Calu3 (cell line): ENCODE measurements at regions of chr18 and their contacts with region 1.

Region 1: GRCh38 chr18:75210274-75211001 is at the start of gene TSHZ1:
- DNase-seq: peak; percentile 43
- H3K4me3 Mint-ChIP-seq: peak within 1 kb of the TSS; percentile 98
- H3K27ac Mint-ChIP-seq: peak within 1 kb of the TSS; percentile 77
- H3K4me1 Mint-ChIP-seq: peaks cover 51% of the 10 kb centered on the region
- H3K27me3 Mint-ChIP-seq: no peaks in the 10 kb centered on the region
- CTCF ChIP-seq: no peak
- total RNA-seq, gene TSHZ1: 8.6 and 10.8 TPM in 2 replicates

Region 2: DNA sequence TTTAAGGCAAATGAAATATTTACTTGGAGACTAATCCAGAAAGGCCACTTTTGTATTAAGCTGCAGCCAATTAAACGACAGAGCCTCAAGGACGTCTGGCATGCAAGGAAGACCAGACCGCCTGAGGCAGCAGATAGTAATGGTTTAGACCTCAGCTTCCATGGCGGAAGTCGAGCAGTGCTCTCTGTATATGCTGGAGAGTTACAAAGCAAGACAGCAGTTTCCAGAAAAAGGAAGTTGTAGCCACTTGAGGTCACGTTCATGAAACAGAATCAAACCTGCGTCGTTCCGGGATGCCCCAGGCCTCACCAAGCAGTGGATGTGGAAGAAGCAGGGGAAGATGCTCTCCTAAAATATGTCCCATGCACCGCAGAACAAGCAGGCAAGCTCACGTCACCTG is 143.5 kb before region 1 on chr18:
- CTCF ChIA-PET with region 1: no interaction called
- intact Hi-C with region 1: no loop called
- DNase-seq: no peak
- H3K4me3 Mint-ChIP-seq: no peak overlapping the region
- H3K27ac Mint-ChIP-seq: no peak overlapping the region
- H3K4me1 Mint-ChIP-seq: peaks cover 16% of the 10 kb centered on the region
- H3K27me3 Mint-ChIP-seq: no peaks in the 10 kb centered on the region
- CTCF ChIP-seq: no peak

Region 3: GRCh38 chr18:75226286-75226955 is 16.0 kb after region 1 on chr18:
- CTCF ChIA-PET with region 1: interaction called, 3 read pairs
- intact Hi-C with region 1: loop called (anchors 1 kb)
- DNase-seq: no peak
- H3K4me3 Mint-ChIP-seq: peak overlapping the region; percentile 24
- H3K27ac Mint-ChIP-seq: no peak overlapping the region
- H3K4me1 Mint-ChIP-seq: peaks cover 16% of the 10 kb centered on the region
- H3K27me3 Mint-ChIP-seq: no peaks in the 10 kb centered on the region
- CTCF ChIP-seq: no peak

Region 4: DNA sequence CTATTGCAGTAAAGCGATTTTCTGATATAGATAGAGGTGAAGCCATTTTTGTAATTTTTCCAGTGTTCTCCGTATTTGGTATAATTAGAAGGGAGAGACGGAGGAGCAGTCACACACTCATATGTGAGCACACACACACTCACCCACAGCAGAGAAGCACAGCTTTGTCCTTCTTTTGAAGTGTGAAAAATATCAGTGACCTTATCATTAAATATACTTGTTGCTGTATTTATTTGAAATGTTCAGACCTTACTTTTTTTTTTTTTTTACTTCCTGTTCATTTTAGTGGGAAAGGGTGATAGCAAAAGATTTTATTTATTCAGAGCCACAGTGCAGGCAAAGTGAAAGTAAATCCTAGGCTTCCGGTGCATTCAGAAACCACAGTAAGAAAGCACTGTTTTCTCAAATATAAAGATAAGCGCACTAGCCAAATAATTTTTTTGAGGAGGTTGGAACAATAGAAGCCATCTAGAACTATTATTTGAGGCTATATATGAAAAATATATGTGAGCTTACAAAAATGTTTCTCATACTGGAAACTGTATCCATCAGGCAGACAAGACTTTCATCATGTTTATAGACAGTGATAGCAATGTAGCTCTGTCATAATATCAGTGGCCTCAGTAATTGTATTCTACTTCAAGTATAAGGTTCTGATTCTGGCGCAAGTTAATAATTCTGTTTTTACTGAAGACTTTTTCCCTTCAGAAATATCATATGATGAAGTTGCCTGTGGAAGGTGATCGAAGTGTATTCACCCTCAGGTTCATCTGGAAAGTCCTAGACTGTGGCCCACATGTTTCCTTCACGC is 37.4 kb after region 1 on chr18:
- CTCF ChIA-PET with region 1: no interaction called
- intact Hi-C with region 1: loop called (anchors 5 kb)
- DNase-seq: no peak
- H3K4me3 Mint-ChIP-seq: peak overlapping the region; percentile 67
- H3K27ac Mint-ChIP-seq: peak overlapping the region; percentile 79
- H3K4me1 Mint-ChIP-seq: peaks cover 9% of the 10 kb centered on the region
- H3K27me3 Mint-ChIP-seq: no peaks in the 10 kb centered on the region
- CTCF ChIP-seq: no peak